ENCODE measurements at regions of chr18 and their contacts with region 1.

Region 1: DNA sequence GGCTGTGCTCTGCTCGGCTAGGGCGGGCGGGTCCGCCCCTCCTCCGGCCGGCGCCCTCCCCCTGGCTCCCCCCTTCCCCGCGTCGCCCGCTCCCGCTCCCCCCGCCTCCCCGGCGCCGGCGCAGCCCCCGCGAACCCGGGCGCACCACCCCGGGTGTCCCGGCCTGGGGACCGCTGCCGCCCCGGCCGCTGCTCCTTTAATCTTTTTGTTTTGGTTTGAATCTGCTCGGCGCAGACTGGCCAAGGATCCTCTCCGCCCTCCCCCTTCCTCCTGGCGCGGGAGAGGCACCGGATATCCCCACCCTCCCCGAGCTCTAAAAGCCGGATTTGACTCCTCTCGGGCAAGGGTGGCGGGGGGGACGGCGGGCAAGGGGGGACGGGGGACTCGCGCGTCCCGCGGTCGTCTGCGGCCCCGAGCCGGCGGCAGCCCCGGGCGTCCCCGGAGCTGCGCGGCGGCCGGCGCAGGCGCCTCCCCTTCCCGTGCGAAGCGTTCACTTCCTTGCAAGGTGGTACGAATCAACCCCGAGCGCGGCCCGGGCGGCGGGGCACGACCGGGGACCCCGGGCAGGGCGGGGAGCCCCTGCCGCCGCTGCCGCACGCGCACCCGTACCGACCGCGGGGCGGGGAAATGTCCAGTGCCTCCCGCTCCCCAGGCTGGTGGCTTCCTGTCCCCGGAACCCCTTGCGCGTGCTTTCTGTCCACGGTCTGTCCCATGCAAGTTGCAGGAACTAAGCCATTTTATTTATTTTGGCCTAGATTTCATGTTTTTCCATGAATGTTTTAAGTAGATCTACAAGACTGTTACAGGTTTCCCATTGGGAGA is at the start of gene PTGR3:
- DNase-seq: peak; percentile 77
- H3K4me3 Mint-ChIP-seq: peak within 1 kb of the TSS; percentile 96
- H3K27ac Mint-ChIP-seq: peak within 1 kb of the TSS; percentile 98
- H3K4me1 Mint-ChIP-seq: peaks cover 60% of the 10 kb centered on the region
- H3K27me3 Mint-ChIP-seq: peaks cover 35% of the 10 kb centered on the region
- total RNA-seq, gene PTGR3: 19.1 and 23.3 TPM in 2 replicates

Region 2: GRCh38 chr18:74063023-74063422 is 1146.3 kb before region 1 on chr18:
- intact Hi-C with region 1: loop called (anchors 10 kb)
- DNase-seq: no peak
- H3K4me3 Mint-ChIP-seq: peak overlapping the region; percentile 19
- H3K27ac Mint-ChIP-seq: peak overlapping the region; percentile 77
- H3K4me1 Mint-ChIP-seq: peaks cover 50% of the 10 kb centered on the region
- H3K27me3 Mint-ChIP-seq: no peaks in the 10 kb centered on the region

Region 3: GRCh38 chr18:74597662-74598349 is 611.5 kb before region 1 on chr18 and contains the start of gene ZNF407:
- intact Hi-C with region 1: loop called (anchors 1 kb)
- DNase-seq: peak; percentile 83
- H3K4me3 Mint-ChIP-seq: peak within 1 kb of the TSS; percentile 97
- H3K27ac Mint-ChIP-seq: peak within 1 kb of the TSS; percentile 96
- H3K4me1 Mint-ChIP-seq: peaks cover 45% of the 10 kb centered on the region
- H3K27me3 Mint-ChIP-seq: no peaks in the 10 kb centered on the region
- total RNA-seq, gene ZNF407: 19.8 and 21.4 TPM in 2 replicates

Region 4: DNA sequence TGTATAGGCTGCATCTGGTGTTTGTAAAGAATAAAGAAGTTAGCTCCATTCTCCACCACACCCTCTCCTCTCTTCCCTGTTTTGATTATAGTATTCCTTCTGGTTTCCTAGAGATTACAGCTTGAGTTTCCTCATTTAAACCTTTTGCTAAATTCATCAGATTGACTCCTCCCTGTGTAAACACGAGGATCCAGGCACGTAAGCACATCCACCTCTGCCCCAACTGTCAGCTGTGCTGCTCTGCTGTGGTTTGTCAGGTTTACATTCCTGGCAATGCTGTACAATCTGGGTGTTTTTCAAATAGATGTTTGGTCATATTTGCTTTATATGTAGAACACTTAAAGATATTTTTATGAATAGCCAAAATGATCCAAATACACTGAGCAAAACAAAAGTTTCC is 303.2 kb before region 1 on chr18:
- intact Hi-C with region 1: loop called (anchors 10 kb)
- DNase-seq: no peak
- H3K4me3 Mint-ChIP-seq: no peak overlapping the region
- H3K27ac Mint-ChIP-seq: no peak overlapping the region
- H3K4me1 Mint-ChIP-seq: peaks cover 11% of the 10 kb centered on the region
- H3K27me3 Mint-ChIP-seq: no peaks in the 10 kb centered on the region

Region 5: DNA sequence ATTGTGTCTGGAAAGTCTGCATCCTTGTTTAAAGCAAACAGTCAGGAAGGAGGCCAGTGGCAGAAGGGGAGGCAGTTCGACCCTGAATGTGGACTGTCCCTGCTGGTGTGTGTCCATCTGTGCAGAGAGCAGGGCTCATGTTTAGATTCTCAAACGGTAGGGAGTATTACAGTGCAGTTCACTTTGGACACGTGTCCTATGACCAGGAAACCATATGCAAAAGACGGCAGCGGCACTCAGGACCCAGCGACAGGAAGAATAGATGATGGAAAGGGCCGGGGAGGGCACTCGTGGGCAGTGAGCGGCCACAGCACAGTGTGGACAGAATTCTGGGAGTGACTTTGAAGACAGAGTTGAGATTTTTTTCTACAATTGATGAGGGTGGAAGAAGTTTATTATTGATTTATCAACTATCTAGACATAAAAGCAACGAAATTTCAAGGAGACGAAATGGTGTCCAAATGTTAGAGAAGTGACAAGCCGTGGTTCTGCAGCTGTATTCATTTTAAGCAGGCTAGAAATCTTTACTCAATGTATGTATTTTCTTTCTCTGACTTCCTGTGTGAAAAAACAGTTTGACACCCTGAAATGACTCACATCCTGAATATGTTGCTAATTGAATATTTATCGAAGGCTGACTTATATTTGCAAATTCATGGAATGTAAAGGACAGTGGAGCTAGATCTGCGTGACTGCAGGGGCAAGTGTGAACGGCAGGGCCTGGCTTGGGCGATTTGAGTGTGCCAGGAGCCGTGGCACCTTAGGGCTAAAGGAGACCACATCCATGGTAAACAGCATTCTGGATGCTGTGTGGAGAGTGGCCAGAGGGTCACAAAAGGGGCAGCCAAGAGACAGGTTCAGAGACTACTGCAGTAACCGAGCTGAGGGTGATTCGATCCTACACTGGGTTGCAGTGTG is 214.6 kb before region 1 on chr18:
- intact Hi-C with region 1: loop called (anchors 2 kb)
- DNase-seq: no peak
- H3K4me3 Mint-ChIP-seq: peak overlapping the region; percentile 65
- H3K27ac Mint-ChIP-seq: peak overlapping the region; percentile 76
- H3K4me1 Mint-ChIP-seq: peaks cover 51% of the 10 kb centered on the region
- H3K27me3 Mint-ChIP-seq: no peaks in the 10 kb centered on the region

Region 6: DNA sequence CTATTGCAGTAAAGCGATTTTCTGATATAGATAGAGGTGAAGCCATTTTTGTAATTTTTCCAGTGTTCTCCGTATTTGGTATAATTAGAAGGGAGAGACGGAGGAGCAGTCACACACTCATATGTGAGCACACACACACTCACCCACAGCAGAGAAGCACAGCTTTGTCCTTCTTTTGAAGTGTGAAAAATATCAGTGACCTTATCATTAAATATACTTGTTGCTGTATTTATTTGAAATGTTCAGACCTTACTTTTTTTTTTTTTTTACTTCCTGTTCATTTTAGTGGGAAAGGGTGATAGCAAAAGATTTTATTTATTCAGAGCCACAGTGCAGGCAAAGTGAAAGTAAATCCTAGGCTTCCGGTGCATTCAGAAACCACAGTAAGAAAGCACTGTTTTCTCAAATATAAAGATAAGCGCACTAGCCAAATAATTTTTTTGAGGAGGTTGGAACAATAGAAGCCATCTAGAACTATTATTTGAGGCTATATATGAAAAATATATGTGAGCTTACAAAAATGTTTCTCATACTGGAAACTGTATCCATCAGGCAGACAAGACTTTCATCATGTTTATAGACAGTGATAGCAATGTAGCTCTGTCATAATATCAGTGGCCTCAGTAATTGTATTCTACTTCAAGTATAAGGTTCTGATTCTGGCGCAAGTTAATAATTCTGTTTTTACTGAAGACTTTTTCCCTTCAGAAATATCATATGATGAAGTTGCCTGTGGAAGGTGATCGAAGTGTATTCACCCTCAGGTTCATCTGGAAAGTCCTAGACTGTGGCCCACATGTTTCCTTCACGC is 38.5 kb after region 1 on chr18:
- intact Hi-C with region 1: loop called (anchors 1 kb)
- DNase-seq: no peak
- H3K4me3 Mint-ChIP-seq: peak overlapping the region; percentile 88
- H3K27ac Mint-ChIP-seq: peak overlapping the region; percentile 15
- H3K4me1 Mint-ChIP-seq: peaks cover 39% of the 10 kb centered on the region
- H3K27me3 Mint-ChIP-seq: peaks cover 2% of the 10 kb centered on the region

Region 7: GRCh38 chr18:75297731-75298130 is 88.4 kb after region 1 on chr18:
- intact Hi-C with region 1: no loop called
- DNase-seq: no peak
- H3K4me3 Mint-ChIP-seq: no peak overlapping the region
- H3K27ac Mint-ChIP-seq: no peak overlapping the region
- H3K4me1 Mint-ChIP-seq: no peaks in the 10 kb centered on the region
- H3K27me3 Mint-ChIP-seq: peaks cover 4% of the 10 kb centered on the region

Region 8: DNA sequence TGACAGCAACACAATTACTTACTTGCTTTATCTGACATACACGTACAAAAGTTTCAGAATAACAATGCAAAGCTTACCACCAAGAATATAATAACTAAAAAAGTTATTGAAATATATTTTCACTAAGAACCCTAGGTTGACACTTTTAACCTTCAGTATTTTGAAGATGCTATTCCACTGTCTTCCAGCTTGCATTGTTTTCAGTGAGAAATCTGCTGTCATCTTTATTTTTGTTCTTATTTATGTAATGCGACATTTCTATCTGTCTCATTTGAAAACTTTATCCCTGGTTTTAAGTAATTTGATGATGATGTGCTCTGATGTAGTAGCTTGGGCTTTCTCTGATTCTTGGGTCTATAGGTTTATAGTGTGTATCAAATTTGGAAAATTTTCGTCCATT is 383.2 kb after region 1 on chr18:
- intact Hi-C with region 1: no loop called
- DNase-seq: no peak
- H3K4me3 Mint-ChIP-seq: no peak overlapping the region
- H3K27ac Mint-ChIP-seq: no peak overlapping the region
- H3K4me1 Mint-ChIP-seq: no peaks in the 10 kb centered on the region
- H3K27me3 Mint-ChIP-seq: no peaks in the 10 kb centered on the region

Region 9: DNA sequence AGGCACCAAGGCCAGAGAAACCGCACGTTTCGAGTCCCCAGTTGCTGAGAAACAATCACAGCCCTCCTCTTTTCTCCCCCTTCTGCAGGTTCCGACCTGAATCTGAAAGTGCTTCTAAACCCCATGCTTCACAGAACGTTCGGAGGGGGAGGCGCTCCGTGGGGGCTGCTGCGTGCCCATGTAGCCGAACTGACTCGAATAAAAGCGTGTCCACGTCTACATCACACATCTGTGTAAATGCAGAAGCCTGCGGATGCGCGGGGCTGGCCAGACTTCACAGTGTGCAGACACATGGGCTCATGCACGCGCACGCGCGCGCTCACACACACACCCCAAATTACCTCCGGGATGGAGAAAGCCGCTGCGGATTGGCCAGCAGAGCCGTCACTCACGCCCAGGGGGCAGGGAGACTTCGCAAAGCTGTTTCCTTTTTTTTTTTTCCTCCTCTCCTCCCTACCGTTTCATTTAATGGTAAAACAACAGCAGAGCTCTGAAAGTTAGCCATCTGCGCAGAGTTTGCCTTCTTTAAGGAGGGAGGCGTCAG is 1283.4 kb after region 1 on chr18:
- intact Hi-C with region 1: loop called (anchors 2 kb)
- DNase-seq: peak; percentile 97
- H3K4me3 Mint-ChIP-seq: peak overlapping the region; percentile 96
- H3K27ac Mint-ChIP-seq: peak overlapping the region; percentile 81
- H3K4me1 Mint-ChIP-seq: peaks cover 37% of the 10 kb centered on the region
- H3K27me3 Mint-ChIP-seq: peaks cover 75% of the 10 kb centered on the region

Measured in activated T-helper 1 cell treated with anti-CD3 and anti-CD28 coated beads, Interleukin-12 subunit alpha, Interleukin-12 subunit beta, Interleukin-2, Interleukin-4 antibody, amounts not matched to agents 30 ng/mL and 10 ng/mL and 1 ng/mL, durations not matched to agents 14 hours and 24 hours and 36 hours (primary cell).